Brain microvascular endothelial cell (primary cell): ENCODE measurements at regions of chr4 and their contacts with region 1.

Region 1: GRCh38 chr4:107913281-107913899 is 18.0 kb upstream of the CYP2U1 start:
- DNase-seq: peak; percentile 76
- H3K4me3 ChIP-seq: no peak overlapping the region
- H3K27ac ChIP-seq: no peak overlapping the region
- H3K27me3 ChIP-seq: no peaks in the 10 kb centered on the region
- CTCF ChIP-seq: peak; percentile 61

Region 2: DNA sequence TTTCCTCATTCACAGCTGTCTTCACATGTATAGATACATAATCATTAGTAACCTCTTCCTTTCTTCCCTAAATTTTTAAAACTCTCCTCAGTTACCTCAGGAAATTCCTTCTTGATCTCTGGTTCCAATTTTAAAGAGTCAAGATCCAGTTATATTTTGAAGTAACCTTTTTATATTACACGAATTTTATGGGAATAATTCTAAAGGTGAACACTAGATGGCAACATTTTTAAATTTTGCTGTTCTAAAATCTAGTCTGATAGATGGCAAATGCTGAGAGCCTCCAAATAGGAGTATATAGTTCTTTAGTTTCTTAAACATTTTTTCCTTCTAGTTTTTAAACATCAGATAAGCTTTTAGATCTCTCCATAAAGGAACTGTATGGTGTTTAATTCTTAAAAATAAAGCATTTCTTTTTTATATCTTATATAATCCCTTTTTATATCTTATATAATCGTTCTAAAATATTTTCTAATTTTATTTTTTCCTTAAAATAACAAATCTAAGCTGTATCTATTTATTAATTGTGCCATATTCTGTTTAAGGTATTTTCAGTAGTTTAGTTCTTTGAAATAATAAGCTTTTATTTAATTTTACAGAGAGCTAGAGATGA is 155.4 kb before region 1 on chr4:
- in situ Hi-C with region 1: loop called (anchors 25 kb)
- DNase-seq: no peak
- H3K4me3 ChIP-seq: no peak overlapping the region
- H3K27ac ChIP-seq: no peak overlapping the region
- H3K27me3 ChIP-seq: no peaks in the 10 kb centered on the region
- CTCF ChIP-seq: no peak

Region 3: DNA sequence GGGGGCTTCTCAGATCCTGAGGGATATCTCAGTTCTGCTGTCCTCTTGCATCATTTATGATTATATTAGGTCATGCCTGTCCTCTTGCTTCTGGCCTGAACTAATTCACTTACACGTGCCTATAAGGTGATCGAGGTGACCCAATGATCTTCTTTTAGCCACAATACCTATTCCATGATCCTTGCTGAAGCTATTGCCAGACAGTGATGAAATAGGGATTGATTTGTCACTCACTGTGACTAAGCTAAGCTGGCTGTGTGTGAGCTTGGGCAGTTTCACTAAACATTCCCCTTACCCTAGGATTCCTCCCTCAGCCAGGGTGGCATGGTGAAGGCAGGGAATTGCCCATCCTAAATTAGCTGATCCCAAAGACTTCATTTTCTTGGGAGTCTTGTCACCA is 95.3 kb after region 1 on chr4:
- in situ Hi-C with region 1: no loop called
- DNase-seq: no peak
- H3K4me3 ChIP-seq: no peak overlapping the region
- H3K27ac ChIP-seq: no peak overlapping the region
- H3K27me3 ChIP-seq: no peaks in the 10 kb centered on the region
- CTCF ChIP-seq: no peak